PC-9 (cell line): ENCODE measurements at regions of chr4 and their contacts with region 1.

Region 1: DNA sequence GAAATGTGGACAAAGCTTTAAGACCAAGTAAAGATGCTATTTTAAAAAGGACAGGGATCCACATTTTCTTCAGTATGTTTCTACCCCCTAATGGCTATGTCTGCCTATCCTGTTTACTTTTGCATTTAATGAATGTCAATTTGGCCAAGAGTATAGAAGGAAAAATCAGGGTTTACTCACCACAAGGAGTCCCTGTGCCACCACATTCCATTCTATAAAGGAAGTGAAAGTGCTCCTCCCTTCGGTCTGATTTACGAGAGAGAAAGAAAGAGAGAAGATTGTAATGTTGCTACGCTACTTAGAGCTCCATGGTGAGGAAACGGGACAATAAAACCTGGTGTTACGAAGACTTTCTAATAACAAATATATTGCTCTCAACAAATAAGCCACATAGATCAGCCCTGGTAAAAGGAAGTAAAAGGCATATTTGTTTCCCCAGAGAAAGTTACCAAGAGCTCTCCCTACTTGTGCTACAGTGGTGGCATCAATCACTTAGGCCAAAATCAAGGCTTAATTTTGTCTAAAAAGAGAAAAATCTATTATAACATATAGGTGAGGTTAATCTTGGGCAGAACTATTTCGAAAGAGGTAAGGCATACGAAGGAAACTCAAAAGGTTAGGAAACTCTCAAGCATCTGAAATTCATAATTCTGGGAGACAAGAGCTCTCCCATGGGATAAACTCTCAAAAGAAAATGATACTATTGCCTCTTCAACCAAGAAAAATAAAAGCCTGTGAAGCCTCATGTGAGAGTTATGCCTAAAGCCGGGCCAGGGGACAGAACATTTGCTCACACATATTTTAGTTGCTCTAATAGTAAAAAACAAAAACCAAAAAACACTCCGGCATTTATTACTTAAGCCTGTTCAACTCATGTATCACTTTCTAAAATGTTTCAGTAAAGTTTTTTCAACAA is 29.5 kb downstream of the TAPT1 start:
- DNase-seq: peak; percentile 14 to 51
- H3K4me3 ChIP-seq: no peak overlapping the region
- H3K27ac ChIP-seq: no peak overlapping the region
- H3K4me1 ChIP-seq: no peaks in the 10 kb centered on the region
- H3K27me3 ChIP-seq: no peaks in the 10 kb centered on the region
- CTCF ChIP-seq: no peak

Region 2: DNA sequence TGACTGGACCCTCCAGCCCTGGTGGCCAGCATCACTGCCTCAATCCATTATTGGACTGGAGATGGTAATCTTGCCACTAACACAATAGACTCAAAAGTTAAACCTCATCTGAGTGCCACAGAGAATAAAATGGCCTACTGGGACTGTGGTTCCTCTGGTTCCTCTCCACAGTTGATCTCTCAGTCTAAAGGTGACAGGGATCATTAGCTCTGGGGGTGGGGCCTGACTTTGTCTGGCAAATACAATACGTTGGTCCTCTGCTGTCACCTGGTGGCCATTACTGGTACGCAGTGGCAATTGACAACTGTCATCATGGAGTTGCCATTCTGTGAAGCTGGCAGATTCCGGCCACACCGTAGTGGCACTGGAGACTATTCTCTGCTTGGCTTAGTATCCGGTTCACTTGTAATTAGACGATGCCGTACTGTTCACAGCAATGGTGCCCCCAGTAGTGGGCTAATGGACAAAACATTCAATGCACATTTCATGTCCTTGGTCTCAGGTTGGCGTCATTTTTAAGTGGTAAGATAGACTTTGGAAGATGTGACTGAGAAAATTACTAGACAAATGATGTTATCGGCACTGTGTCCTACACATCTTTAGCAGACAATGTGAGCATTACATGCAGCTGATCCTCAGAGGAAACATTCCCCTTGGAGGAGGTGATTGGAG is 240.4 kb before region 1 on chr4:
- CTCF ChIA-PET with region 1: no interaction called
- POLR2A ChIA-PET with region 1: no interaction called
- intact Hi-C with region 1: loop called (anchors 5 kb)
- DNase-seq: peak; percentile 66 to 73
- H3K4me3 ChIP-seq: no peak overlapping the region
- H3K27ac ChIP-seq: no peak overlapping the region
- H3K4me1 ChIP-seq: peaks cover 5% of the 10 kb centered on the region; the same call in 1 of the 2 replicates
- H3K27me3 ChIP-seq: no peaks in the 10 kb centered on the region
- CTCF ChIP-seq: peak; percentile 93

Region 3: DNA sequence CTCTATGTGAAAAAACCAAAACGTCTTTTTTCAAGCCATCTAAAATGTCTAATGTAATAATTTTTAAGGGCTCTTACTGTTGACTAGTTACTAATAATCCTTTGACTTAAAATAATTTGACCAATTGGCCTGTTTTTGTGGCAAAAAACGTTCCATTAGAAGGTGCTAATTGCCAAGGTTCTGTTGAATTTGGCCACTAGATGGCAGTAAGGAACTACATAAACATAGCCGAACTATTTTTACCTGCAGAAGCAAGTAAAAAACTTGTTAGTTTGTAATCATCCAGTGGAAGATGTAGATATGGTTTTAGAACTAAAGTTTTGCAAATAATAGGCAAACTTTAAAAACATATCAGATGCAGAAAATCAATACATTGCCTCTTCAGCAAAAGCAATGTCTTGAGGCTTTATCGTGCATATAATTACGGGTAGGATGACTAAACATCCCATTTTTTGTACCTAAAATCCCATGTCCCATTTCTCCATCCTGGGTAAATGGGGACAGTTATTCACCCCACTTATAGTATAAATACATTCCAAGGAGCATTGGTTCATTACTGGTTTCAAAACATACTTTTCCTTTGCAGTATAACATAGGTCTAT is 170.5 kb before region 1 on chr4:
- CTCF ChIA-PET with region 1: interaction called, 3 read pairs
- POLR2A ChIA-PET with region 1: interaction called, 3 read pairs
- intact Hi-C with region 1: loop called (anchors 1 kb)
- DNase-seq: peak in 1 of 2 experiments; percentile 6
- H3K4me3 ChIP-seq: no peak overlapping the region
- H3K27ac ChIP-seq: no peak overlapping the region
- H3K4me1 ChIP-seq: no peaks in the 10 kb centered on the region
- H3K27me3 ChIP-seq: no peaks in the 10 kb centered on the region
- CTCF ChIP-seq: peak; percentile 84

Region 4: GRCh38 chr4:16140520-16141249 is 56.1 kb before region 1 on chr4:
- CTCF ChIA-PET with region 1: interaction called, 6 read pairs
- POLR2A ChIA-PET with region 1: interaction called, 3 read pairs
- intact Hi-C with region 1: loop called (anchors 2 kb)
- DNase-seq: peak; percentile 82 to 95
- H3K4me3 ChIP-seq: no peak overlapping the region
- H3K27ac ChIP-seq: peak overlapping the region; percentile 68
- H3K4me1 ChIP-seq: peaks cover 23% of the 10 kb centered on the region
- H3K27me3 ChIP-seq: no peaks in the 10 kb centered on the region
- CTCF ChIP-seq: no peak

Region 5: DNA sequence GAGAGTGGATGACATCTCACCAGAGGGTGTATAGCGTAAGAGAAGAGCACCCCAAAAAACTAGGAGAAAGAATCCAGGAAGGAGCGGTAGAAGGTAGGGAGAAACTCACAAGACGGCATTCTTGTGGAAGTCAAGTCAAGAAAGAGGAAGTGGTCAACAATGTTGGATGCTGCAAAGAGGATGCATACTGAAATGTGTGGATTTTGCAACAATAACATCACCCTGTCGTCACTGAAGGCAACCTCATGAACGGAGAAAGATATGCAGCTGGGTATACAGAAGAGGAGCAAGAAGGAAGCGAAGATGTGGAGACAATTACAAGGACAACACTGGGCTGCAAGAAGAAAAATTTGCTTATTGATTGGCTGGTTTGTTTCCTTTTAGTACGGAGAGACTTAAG is 41.0 kb after region 1 on chr4:
- CTCF ChIA-PET with region 1: no interaction called
- POLR2A ChIA-PET with region 1: no interaction called
- intact Hi-C with region 1: no loop called
- DNase-seq: no peak
- H3K4me3 ChIP-seq: no peak overlapping the region
- H3K27ac ChIP-seq: no peak overlapping the region
- H3K4me1 ChIP-seq: no peaks in the 10 kb centered on the region
- H3K27me3 ChIP-seq: no peaks in the 10 kb centered on the region
- CTCF ChIP-seq: no peak

Region 6: GRCh38 chr4:16264798-16265197 is 68.1 kb after region 1 on chr4:
- CTCF ChIA-PET with region 1: interaction called, 4 read pairs
- POLR2A ChIA-PET with region 1: no interaction called
- intact Hi-C with region 1: loop called (anchors 10 kb)
- DNase-seq: no peak
- H3K4me3 ChIP-seq: no peak overlapping the region
- H3K27ac ChIP-seq: no peak overlapping the region
- H3K4me1 ChIP-seq: no peaks in the 10 kb centered on the region
- H3K27me3 ChIP-seq: no peaks in the 10 kb centered on the region
- CTCF ChIP-seq: peak; percentile 53

Region 7: GRCh38 chr4:16351161-16351560 is 154.4 kb after region 1 on chr4:
- CTCF ChIA-PET with region 1: no interaction called
- POLR2A ChIA-PET with region 1: no interaction called
- intact Hi-C with region 1: no loop called
- DNase-seq: no peak
- H3K4me3 ChIP-seq: no peak overlapping the region
- H3K27ac ChIP-seq: no peak overlapping the region
- H3K4me1 ChIP-seq: no peaks in the 10 kb centered on the region
- H3K27me3 ChIP-seq: no peaks in the 10 kb centered on the region; the same call in 1 of the 2 replicates
- CTCF ChIP-seq: no peak

Region 8: DNA sequence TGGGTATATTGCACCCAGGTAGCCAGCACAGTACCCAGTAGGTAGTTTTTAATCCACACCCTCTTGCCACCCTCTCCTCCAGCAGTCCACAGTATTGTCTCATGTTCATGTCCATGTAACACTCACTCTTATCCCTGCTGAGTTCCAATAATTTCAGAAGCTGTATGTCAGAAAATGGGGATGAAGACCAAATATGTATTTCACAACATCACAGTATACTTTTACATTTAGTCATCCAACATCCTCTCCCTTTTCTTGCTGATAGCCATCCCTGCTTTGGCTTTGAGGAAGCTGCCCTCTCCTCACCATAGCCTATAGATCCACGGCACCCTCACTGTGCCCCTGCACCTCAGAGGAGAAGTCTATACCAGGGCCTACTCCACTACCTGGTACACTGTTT is 827.7 kb after region 1 on chr4:
- CTCF ChIA-PET with region 1: no interaction called
- POLR2A ChIA-PET with region 1: no interaction called
- intact Hi-C with region 1: no loop called
- DNase-seq: no peak
- H3K4me3 ChIP-seq: no peak overlapping the region
- H3K27ac ChIP-seq: no peak overlapping the region
- H3K4me1 ChIP-seq: no peaks in the 10 kb centered on the region
- H3K27me3 ChIP-seq: peaks cover 9% of the 10 kb centered on the region; the same call in 1 of the 2 replicates
- CTCF ChIP-seq: no peak